Activated CD4-positive, alpha-beta memory T cell treated with anti-CD3 and anti-CD28 coated beads for 36 hours (primary cell): ENCODE measurements at regions of chr16 and their contacts with region 1.

Region 1: GRCh38 chr16:50520451-50521245 is 27.5 kb upstream of the NKD1 start:
- DNase-seq: no peak
- H3K4me3 Mint-ChIP-seq: no peak overlapping the region
- H3K27ac Mint-ChIP-seq: no peak overlapping the region
- H3K4me1 Mint-ChIP-seq: no peaks in the 10 kb centered on the region
- H3K27me3 Mint-ChIP-seq: peaks cover 2% of the 10 kb centered on the region

Region 2: DNA sequence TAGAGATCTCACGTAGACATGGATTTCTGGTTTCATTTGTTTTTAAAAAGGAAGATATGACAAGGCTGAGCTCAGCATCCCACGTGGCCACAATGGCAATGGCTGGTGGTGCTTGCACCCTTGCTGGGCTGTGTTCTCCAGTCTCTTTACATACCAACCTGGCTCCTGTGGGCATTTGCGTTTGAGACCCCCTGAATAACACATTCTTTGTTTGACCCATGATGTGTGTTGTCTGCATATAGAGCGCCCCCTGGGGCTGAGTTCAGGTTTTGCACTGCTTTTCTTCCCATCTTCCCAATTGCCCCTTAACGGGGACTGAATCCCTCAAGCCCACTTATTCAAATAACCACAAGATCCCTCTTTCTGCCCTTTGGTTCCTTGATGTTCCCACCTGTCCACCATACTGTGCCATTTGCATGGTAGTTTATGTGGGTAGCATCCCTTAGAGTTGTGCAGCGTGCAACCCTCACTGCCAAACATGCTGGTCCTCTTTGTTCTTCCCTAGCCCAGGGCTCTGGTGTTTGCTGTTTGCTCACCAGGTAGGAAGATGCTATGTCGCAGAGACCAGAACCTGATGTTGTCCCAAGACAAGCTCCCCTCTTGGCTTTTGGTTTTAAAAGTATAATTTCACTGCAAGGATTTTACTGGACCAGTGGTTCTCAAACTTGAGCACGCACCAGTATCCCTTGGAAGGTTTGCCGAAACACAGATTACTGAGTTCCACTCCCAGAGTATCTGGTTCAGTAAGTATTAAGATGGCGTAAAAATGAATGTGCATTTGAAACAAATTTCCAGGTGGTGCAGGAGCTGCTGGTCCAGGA is 10.9 kb before region 1 on chr16:
- CTCF ChIA-PET with region 1: interaction called, 12 read pairs
- POLR2A ChIA-PET with region 1: no interaction called
- intact Hi-C with region 1: no loop called
- DNase-seq: peak; percentile 66
- H3K4me3 Mint-ChIP-seq: no peak overlapping the region
- H3K27ac Mint-ChIP-seq: no peak overlapping the region
- H3K4me1 Mint-ChIP-seq: no peaks in the 10 kb centered on the region
- H3K27me3 Mint-ChIP-seq: no peaks in the 10 kb centered on the region